ENCODE measurements at regions of chr10 and their contacts with region 1.

Region 1: DNA sequence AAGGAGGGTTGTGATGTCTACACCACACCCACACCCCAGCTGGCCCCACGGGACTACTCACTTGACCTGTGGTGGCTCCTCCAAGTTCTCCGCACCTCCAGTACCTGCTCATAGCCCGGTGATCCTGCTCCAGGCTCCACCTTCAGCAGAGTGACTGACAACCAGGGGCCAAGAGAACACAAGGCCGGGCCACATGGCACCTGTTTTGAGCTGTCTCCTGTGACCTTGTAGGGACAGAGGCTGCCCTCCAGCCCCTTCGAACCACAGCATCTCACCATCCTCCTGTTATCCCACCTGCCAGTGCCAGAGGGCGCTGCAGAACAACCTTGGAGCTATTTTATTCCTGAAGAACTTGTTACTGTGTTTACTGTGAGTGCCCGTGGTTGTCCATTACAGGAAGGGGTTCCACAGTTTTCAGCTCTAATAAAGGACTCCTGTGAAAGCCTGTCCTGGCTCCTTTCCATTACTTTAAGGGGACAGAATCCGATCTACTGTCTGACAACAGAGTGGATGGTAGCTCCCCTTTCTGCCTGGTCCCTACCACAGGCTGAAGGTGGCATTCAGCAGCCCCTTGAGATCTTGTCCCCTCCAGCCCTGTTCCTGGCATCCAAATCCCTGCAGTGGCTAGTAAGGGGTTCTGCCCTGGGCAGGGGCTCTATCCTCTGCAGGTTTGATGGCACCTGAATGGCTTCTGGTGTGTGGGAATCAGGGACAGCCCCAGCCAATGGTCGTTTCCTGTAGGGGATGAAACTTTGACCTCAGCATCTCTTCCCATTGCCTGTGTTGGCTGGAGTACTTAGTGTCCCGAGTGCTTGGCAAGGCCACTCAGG is 50.8 kb downstream of the C10orf120 start:
- DNase-seq: peak; percentile 13 to 79 (median 66)
- H3K4me3 ChIP-seq: no peak overlapping the region
- H3K27ac ChIP-seq: no peak overlapping the region
- H3K27me3 ChIP-seq: peaks cover 0 to 15% (median 0%) of the 10 kb centered on the region in 45 donors
- CTCF ChIP-seq: peak; percentile 45 to 94 (median 86)

Region 2: DNA sequence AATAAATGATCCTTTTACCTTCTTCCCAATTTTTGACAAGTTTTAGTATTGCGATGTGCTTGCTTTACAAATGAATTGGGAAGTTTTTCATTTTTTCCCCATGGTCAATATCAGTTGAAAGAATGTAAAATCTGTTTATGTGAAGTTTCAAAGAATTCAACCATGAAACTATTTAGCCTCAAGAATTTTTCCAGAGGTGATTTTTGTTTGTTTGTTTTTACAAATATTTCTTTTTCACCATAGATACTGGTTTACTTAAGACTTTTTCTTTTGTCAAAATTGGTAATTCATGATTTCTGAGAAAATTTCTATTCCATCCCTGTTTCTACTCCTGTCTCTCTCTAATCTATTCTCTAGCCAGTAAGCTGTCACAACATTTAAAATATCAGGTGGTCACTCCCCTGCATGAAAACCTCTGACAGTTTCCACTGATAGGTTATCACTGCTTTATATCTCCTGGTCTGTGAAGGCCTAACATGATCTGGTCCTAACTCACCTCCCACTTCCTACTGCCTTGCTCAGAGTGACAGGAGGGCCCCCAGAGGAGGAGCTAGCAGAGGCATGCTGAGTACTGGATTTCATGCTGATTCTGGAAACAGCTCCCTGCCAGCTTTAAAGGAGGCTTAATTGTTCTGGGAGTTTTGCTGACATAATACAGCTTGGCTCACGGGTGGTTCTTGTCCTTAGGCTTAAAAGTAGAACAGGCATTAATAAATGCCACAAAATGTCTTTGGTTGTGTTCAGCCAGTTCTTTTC is 202.0 kb before region 1 on chr10:
- intact Hi-C with region 1: loop called in 1 of 2 experiments (anchors 10 kb)
- DNase-seq: no peak
- H3K4me3 ChIP-seq: no peak overlapping the region
- H3K27ac ChIP-seq: peak overlapping the region in 2 of 59 donors; percentile 12 to 23
- H3K27me3 ChIP-seq: no peaks in the 10 kb centered on the region
- CTCF ChIP-seq: no peak

Region 3: DNA sequence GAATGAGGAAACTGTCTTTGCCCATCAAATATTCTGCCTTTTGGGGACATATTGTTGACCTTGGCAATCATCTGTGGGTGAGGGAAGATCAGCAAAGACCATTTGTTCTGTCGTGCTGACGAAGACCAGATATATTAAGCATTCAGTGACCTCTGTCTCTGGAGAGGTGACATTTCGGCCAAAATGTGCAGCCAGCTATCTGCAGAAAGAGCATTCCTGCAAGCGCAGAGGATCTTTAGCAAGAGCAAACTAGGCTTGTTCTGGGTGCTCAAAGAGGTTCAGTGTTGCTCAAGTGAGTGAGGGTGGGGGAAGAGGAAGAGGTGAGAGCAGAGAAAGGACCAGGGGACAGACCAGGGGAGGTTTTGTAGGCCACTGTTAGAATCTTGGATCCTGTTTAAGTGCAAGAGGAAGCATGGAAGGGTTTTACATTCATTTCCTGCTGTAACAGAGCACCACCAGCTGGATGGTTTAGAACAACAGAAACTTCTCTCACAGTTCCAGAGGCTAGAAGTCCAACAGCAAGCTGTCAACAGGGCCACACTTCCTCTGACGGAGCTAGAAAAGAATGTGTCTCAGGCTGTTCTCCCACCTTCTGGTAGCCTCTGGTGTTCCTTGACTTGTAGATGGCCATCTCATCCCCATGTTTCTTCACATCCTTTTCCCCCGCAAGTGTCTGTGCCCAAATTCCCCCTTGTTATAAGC is 39.6 kb after region 1 on chr10:
- intact Hi-C with region 1: loop called in 1 of 2 experiments (anchors 5 kb)
- DNase-seq: no peak
- H3K4me3 ChIP-seq: no peak overlapping the region
- H3K27ac ChIP-seq: peak overlapping the region in 3 of 59 donors; percentile 10 to 44 (median 44)
- H3K27me3 ChIP-seq: peaks cover 0 to 14% (median 0%) of the 10 kb centered on the region in 45 donors
- CTCF ChIP-seq: peak in 30 of 56 donors; percentile 10 to 63 (median 34)

Region 4: DNA sequence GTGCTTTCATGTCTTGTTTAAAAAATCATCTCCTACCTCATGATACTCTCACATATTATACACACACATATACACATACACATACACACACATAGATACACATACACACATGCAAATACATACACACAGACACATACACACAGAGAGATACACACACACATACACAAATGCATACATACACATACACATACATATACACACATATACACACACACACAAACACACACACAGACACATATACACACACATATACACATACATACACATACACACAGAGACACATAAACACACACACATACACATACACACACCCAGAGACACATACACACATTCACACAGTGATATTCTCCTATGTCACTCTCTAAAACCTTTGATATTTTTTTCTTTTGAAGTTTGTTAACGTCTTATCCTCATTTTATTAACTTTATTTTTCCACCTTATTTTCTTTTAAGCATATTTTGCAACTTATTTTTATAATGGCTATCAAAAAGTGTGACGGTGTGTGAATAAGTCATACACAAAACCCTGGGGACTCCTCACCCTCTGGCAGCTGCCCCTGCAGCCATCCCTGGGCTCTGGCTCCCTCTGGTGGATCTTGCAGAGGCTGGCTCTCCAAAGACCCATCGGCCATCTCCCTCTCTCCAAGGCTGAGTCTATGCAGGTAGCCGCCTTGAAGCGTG is 54.8 kb after region 1 on chr10:
- intact Hi-C with region 1: loop called (anchors 1 to 2 kb)
- DNase-seq: peak; percentile 30 to 88 (median 76)
- H3K4me3 ChIP-seq: no peak overlapping the region
- H3K27ac ChIP-seq: peak overlapping the region in 2 of 59 donors; percentile 57 to 75
- H3K27me3 ChIP-seq: peaks cover 0 to 4% (median 0%) of the 10 kb centered on the region in 45 donors
- CTCF ChIP-seq: peak in 55 of 56 donors; percentile 26 to 97 (median 89)

Region 5: DNA sequence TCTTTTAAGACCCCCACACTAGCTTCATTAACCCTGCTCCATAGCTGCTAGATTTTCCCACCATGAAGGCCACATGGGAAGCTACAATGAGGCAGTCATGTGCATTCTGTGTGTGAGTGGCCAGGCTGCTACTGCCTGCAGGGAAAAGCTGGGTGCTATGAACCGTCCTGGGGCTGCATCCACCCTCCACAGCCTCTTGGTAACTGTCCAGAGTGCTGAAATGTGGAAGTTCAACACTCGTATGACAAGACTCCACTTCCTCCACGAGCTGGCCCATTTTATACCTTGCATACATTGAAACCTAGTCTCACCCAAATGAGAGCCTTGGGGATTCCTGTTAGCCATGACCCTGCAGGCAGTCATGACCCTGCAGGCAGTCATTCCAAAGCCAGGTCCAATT is 137.5 kb after region 1 on chr10:
- intact Hi-C with region 1: no loop called
- DNase-seq: no peak
- H3K4me3 ChIP-seq: no peak overlapping the region
- H3K27ac ChIP-seq: no peak overlapping the region
- H3K27me3 ChIP-seq: peaks cover 0 to 6% (median 0%) of the 10 kb centered on the region in 45 donors
- CTCF ChIP-seq: no peak

Measured in dorsolateral prefrontal cortex (tissue), 120 donors.